ENCODE measurements at regions of chr3 and their contacts with region 1.

Region 1: DNA sequence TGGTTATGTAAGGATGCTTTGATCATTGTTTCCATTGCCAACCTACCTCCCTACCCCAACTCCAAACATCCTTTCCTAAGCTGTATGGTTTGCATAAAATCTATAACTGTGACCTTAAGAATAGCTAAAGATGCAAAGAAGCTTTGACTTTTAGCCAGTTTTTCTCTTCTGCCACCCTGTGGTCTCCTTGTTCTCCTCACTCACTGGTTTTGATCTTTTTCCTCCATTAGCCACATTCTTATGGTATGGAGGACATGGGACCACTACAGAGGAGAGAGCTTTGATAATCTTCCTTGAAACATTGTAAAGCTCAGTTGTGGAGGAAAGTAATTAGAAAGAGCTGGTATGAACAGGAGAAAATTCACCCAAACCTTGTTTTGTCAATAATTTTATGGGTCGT is 115.9 kb downstream of the NEK11 start:
- DNase-seq: no peak
- H3K4me3 ChIP-seq: no peak overlapping the region
- H3K27ac ChIP-seq: no peak overlapping the region
- H3K4me1 ChIP-seq: no peaks in the 10 kb centered on the region
- H3K27me3 ChIP-seq: no peaks in the 10 kb centered on the region
- CTCF ChIP-seq: peak in 1 of 2 donors; percentile 8

Region 2: GRCh38 chr3:131072845-131073244 is 69.7 kb before region 1 on chr3:
- CTCF ChIA-PET with region 1: no interaction called
- dilution Hi-C with region 1: no loop called
- in situ Hi-C with region 1: no loop called
- intact Hi-C with region 1: no loop called
- DNase-seq: no peak
- H3K4me3 ChIP-seq: no peak overlapping the region
- H3K27ac ChIP-seq: no peak overlapping the region
- H3K4me1 ChIP-seq: no peaks in the 10 kb centered on the region
- H3K27me3 ChIP-seq: no peaks in the 10 kb centered on the region
- CTCF ChIP-seq: no peak

Region 3: GRCh38 chr3:131167867-131168266 is 25.3 kb after region 1 on chr3:
- CTCF ChIA-PET with region 1: interaction called, 10 read pairs
- dilution Hi-C with region 1: no loop called
- in situ Hi-C with region 1: no loop called
- intact Hi-C with region 1: no loop called
- DNase-seq: no peak
- H3K4me3 ChIP-seq: no peak overlapping the region
- H3K27ac ChIP-seq: no peak overlapping the region
- H3K4me1 ChIP-seq: no peaks in the 10 kb centered on the region
- H3K27me3 ChIP-seq: no peaks in the 10 kb centered on the region
- CTCF ChIP-seq: no peak

Region 4: GRCh38 chr3:131192677-131193076 is 50.1 kb after region 1 on chr3:
- CTCF ChIA-PET with region 1: no interaction called
- dilution Hi-C with region 1: no loop called
- in situ Hi-C with region 1: no loop called
- intact Hi-C with region 1: no loop called
- DNase-seq: no peak
- H3K4me3 ChIP-seq: no peak overlapping the region
- H3K27ac ChIP-seq: no peak overlapping the region
- H3K4me1 ChIP-seq: no peaks in the 10 kb centered on the region
- H3K27me3 ChIP-seq: no peaks in the 10 kb centered on the region
- CTCF ChIP-seq: no peak

Region 5: GRCh38 chr3:131221731-131222130 is 79.2 kb after region 1 on chr3:
- CTCF ChIA-PET with region 1: no interaction called
- dilution Hi-C with region 1: no loop called
- in situ Hi-C with region 1: no loop called
- intact Hi-C with region 1: no loop called
- DNase-seq: peak; percentile 69
- H3K4me3 ChIP-seq: no peak overlapping the region
- H3K27ac ChIP-seq: no peak overlapping the region
- H3K4me1 ChIP-seq: peaks cover 18% of the 10 kb centered on the region
- H3K27me3 ChIP-seq: no peaks in the 10 kb centered on the region
- CTCF ChIP-seq: no peak